Tibial artery (tissue), 4 donors: ENCODE measurements at regions of chr13 and their contacts with region 1.

Region 1: DNA sequence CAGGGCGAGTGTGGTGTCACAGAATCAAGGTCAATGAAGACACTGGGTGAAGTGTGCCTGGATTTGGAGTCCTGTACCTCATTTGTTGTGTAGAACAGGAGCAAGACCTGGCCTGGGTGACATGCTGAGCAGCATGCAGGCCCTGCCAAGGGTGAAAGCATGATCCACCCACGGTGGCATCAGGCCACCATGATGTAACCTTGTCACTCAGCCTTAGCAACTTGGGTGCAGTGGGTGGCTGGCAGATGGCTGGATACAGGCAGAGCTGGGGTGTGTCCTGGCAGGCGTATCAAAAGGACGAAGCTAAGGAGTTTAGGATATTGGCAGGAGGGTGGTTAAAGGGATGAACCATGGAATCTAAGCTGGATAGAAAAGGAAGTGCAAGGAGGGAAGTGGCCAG is 10.3 kb downstream of the THSD1 start:
- DNase-seq: no peak
- H3K4me3 ChIP-seq: no peak overlapping the region
- H3K27ac ChIP-seq: no peak overlapping the region
- H3K4me1 ChIP-seq: no peaks in the 10 kb centered on the region
- H3K27me3 ChIP-seq: no peaks in the 10 kb centered on the region
- CTCF ChIP-seq: no peak

Region 2: GRCh38 chr13:52348983-52349780 is 46.5 kb before region 1 on chr13:
- intact Hi-C with region 1: loop called (anchors 2 kb)
- DNase-seq: no peak
- H3K4me3 ChIP-seq: no peak overlapping the region
- H3K27ac ChIP-seq: no peak overlapping the region
- H3K4me1 ChIP-seq: no peaks in the 10 kb centered on the region
- H3K27me3 ChIP-seq: no peaks in the 10 kb centered on the region
- CTCF ChIP-seq: no peak

Region 3: GRCh38 chr13:52846567-52847321 is 451.0 kb after region 1 on chr13:
- intact Hi-C with region 1: no loop called
- DNase-seq: peak in 1 of 2 donors; percentile 24
- H3K4me3 ChIP-seq: peak overlapping the region in 1 of 2 donors; percentile 8
- H3K27ac ChIP-seq: no peak overlapping the region
- H3K4me1 ChIP-seq: peaks cover 0 to 42% (median 28%) of the 10 kb centered on the region in 4 donors
- H3K27me3 ChIP-seq: peaks cover 0 to 77% of the 10 kb centered on the region in 2 donors
- CTCF ChIP-seq: peak; percentile 14 to 26

Region 4: DNA sequence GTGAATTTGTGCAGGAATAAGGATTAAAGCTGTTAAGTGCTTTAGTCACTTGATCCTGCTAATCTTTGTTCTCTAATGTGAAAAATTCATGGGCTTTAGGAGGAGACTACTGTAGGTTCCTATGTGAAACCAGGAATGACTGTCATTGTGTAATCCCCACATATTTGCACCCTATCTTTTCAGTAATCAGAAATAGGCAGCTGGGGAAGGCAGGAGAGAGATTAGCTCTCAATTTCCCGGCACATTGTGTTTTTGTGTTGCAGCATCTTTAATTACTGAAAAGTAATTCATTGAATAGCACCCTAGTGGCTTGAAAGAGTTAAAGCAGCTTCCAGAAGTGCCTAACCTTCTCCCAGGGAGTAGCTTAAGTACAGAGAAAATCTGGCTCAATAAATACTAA is 915.9 kb after region 1 on chr13:
- intact Hi-C with region 1: no loop called
- DNase-seq: no peak
- H3K4me3 ChIP-seq: no peak overlapping the region
- H3K27ac ChIP-seq: no peak overlapping the region
- H3K4me1 ChIP-seq: no peaks in the 10 kb centered on the region
- H3K27me3 ChIP-seq: no peaks in the 10 kb centered on the region
- CTCF ChIP-seq: no peak